MCF 10A (cell line): ENCODE measurements at regions of chr2 and their contacts with region 1.

Region 1: DNA sequence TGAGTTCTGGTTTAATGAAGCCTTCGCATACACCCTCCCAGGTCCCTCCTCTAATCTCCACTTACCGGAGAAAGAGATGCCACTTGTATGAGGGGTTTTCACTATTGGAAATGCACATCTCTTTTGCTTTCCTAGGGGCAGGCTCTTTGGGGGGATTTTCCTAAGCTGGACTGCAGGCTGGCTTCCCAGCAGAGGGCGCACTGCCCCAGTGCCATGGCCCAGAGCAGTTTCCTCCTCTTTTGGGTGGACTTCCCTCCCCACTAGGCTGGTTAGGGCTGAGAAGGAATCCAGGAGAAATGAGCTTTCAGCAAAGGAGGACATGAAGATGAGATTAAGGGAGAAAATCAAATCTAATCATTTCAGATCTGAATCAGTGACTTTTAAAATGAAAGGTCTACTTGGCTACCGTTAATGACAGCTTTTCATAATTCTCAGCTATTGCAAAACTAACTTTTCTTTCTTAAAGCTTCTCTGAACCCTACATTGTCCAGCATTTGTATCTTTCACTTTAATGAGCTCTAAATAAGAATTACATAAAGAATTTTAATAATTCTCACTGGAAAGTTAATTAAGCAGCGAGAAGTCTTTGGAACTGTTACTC is 784.1 kb upstream of the FANCL start:
- DNase-seq: peak; percentile 41
- H3K4me3 Mint-ChIP-seq: no peak overlapping the region
- H3K27ac Mint-ChIP-seq: no peak overlapping the region
- H3K4me1 Mint-ChIP-seq: no peaks in the 10 kb centered on the region
- H3K27me3 Mint-ChIP-seq: no peaks in the 10 kb centered on the region
- CTCF ChIP-seq: peak; percentile 63

Region 2: DNA sequence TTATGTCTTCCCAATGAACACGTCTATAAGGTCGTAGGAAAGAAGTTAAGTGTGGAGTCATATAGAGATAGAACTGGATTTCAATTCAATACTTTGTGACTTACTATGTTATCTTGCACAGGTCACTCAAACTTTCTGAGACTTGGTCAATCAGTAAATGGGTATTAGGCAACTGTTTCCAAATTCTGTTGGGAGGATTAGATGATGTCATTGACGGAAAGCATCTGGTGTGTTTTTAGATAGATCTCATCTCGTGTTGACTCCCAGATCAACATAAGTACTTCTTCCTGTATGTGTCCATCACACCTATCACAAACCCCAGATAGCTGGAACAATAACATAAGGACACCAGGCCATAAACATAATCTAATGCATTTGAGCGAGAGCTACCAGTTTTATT is 13.0 kb before region 1 on chr2:
- CTCF ChIA-PET with region 1: interaction called, 12 read pairs
- POLR2A ChIA-PET with region 1: interaction called, 3 read pairs
- intact Hi-C with region 1: no loop called
- DNase-seq: no peak
- H3K4me3 Mint-ChIP-seq: no peak overlapping the region
- H3K27ac Mint-ChIP-seq: no peak overlapping the region
- H3K4me1 Mint-ChIP-seq: no peaks in the 10 kb centered on the region
- H3K27me3 Mint-ChIP-seq: no peaks in the 10 kb centered on the region
- CTCF ChIP-seq: no peak

Region 3: DNA sequence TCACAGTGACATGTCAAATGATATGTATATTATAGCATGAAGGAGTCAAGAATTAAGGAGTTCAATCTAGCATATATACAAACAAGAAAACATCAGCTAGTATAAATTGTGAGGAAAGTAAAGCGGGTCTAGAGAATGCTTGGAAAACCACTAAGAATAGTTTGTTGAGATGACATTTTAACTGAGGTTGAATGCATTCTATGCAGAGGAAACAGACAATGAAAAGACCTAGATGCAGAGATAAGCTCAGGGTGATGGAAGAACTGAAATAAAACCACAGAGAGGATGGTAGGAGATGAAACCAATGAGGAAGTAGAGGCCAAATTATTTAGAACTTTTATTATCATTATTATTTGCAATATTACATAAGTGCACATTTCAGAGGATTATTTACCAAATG is 19.5 kb after region 1 on chr2:
- CTCF ChIA-PET with region 1: interaction called, 11 read pairs
- POLR2A ChIA-PET with region 1: no interaction called
- intact Hi-C with region 1: no loop called
- DNase-seq: no peak
- H3K4me3 Mint-ChIP-seq: no peak overlapping the region
- H3K27ac Mint-ChIP-seq: no peak overlapping the region
- H3K4me1 Mint-ChIP-seq: no peaks in the 10 kb centered on the region
- H3K27me3 Mint-ChIP-seq: no peaks in the 10 kb centered on the region
- CTCF ChIP-seq: no peak